Heart right ventricle (tissue), 16 donors: ENCODE measurements at regions of chr1 and their contacts with region 1.

Region 1: DNA sequence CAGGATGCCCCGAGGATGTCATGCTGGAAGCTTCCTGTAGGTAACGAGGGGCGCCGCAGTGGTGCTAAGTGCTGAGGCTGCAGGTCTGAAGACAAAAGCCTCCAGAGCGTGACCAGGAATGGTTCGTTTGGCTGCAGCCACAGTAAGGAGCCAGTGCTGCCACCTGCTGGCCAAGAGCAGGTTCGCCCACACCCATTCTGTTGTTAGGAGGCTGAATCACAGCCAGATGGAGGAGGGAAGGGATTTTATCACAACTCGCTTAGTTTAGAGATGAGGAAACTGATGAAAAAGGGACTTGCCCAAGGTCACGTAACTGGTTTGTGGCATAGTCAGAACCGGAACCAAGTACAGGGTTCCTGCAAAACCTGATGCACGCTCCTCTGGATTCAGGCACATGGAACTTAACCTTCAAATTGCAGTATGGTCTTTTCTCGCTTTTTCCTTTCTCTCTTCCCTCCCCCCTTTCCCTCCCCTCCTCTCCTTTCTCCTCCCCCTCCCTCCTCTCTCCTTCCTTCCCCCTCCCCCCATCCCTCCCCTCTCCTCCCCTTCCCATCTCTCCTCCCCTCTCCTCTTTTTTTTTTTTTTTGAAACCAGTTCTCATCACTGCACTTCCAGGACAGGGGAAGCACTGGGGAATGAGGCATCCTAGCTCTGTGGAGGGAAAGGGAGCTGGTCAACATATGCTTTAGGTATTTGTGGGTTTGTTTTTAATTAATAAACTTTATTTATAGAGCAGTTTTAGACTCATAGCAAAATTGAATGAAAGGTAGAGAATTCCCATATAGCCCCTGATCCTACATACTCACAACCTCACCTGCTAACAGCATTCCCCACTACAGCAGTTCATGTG is 81.8 kb downstream of the MPZL1 start:
- DNase-seq: peak; percentile 92
- ATAC-seq: peak; percentile 94 to 98 (median 96)
- H3K4me3 ChIP-seq: peak overlapping the region in 1 of 10 donors; percentile 28
- H3K27ac ChIP-seq: peak overlapping the region in 2 of 10 donors; percentile 3 to 45
- H3K4me1 ChIP-seq: peaks cover 0 to 22% (median 6%) of the 10 kb centered on the region in 9 donors
- H3K27me3 ChIP-seq: no peaks in the 10 kb centered on the region
- CTCF ChIP-seq: peak; percentile 88 to 99 (median 97)

Region 2: DNA sequence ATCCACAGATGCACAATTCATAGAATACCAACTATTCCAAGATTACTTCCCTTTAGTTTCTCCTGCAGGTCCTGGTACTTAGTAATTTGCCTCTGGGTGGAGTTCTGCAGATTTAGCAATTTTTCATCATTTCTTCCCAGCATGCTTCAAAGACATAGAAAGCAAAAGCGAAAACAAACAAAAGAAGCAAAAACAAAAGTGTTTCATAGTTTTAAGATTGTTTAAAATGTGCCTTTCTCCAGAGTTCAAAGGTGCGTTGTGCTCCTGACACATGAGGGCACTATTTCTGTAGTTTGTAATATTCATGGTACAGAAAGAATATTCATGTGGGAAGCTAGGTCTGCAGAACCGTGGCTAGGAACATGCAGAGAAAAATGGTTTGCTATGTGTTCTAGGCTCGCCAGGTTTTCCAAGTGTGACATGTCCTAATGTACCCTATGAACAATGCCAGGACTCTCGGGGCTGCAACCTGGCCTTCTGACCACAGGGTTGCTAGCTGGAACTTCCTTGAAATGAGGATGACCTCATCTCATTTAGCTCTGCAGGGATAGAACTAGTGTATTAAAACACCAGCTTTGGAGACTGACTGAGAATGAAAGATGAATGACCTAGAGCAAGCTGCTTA is 203.5 kb before region 1 on chr1:
- intact Hi-C with region 1: loop called in 6 of 10 experiments (anchors 2 to 10 kb)
- DNase-seq: peak in 1 of 2 donors; percentile 51
- ATAC-seq: peak; percentile 73 to 89 (median 82)
- H3K4me3 ChIP-seq: peak overlapping the region in 1 of 10 donors; percentile 15
- H3K27ac ChIP-seq: peak overlapping the region in 7 of 10 donors; percentile 35 to 91 (median 58)
- H3K4me1 ChIP-seq: peaks cover 5 to 45% (median 33%) of the 10 kb centered on the region in 9 donors
- H3K27me3 ChIP-seq: no peaks in the 10 kb centered on the region
- CTCF ChIP-seq: peak; percentile 47 to 86 (median 72)

Region 3: GRCh38 chr1:167715157-167715999 is 88.2 kb before region 1 on chr1:
- intact Hi-C with region 1: loop called (anchors 1 to 5 kb)
- DNase-seq: peak; percentile 77 to 90
- ATAC-seq: peak; percentile 36 to 80 (median 65)
- H3K4me3 ChIP-seq: peak overlapping the region; percentile 54 to 84 (median 72)
- H3K27ac ChIP-seq: peak overlapping the region; percentile 80 to 94 (median 88)
- H3K4me1 ChIP-seq: peaks cover 0 to 31% (median 6%) of the 10 kb centered on the region in 9 donors
- H3K27me3 ChIP-seq: no peaks in the 10 kb centered on the region
- CTCF ChIP-seq: peak; percentile 58 to 94 (median 78)

Region 4: GRCh38 chr1:167721617-167722151 is 81.9 kb before region 1 on chr1 and contains the start of gene MPZL1:
- intact Hi-C with region 1: loop called in 7 of 10 experiments (anchors 2 to 5 kb)
- DNase-seq: peak; percentile 96 to 98
- ATAC-seq: peak; percentile 99
- H3K4me3 ChIP-seq: peak within 1 kb of the TSS; percentile 65 to 99 (median 94)
- H3K27ac ChIP-seq: peak within 1 kb of the TSS; percentile 51 to 94 (median 88)
- H3K4me1 ChIP-seq: peaks cover 4 to 49% (median 37%) of the 10 kb centered on the region in 9 donors
- H3K27me3 ChIP-seq: no peaks in the 10 kb centered on the region
- CTCF ChIP-seq: no peak
- total RNA-seq, gene MPZL1: 15.6 to 52.5 (median 25.2) TPM